Natural killer cell (primary cell): ENCODE measurements at regions of chr1 and their contacts with region 1.

Region 1: DNA sequence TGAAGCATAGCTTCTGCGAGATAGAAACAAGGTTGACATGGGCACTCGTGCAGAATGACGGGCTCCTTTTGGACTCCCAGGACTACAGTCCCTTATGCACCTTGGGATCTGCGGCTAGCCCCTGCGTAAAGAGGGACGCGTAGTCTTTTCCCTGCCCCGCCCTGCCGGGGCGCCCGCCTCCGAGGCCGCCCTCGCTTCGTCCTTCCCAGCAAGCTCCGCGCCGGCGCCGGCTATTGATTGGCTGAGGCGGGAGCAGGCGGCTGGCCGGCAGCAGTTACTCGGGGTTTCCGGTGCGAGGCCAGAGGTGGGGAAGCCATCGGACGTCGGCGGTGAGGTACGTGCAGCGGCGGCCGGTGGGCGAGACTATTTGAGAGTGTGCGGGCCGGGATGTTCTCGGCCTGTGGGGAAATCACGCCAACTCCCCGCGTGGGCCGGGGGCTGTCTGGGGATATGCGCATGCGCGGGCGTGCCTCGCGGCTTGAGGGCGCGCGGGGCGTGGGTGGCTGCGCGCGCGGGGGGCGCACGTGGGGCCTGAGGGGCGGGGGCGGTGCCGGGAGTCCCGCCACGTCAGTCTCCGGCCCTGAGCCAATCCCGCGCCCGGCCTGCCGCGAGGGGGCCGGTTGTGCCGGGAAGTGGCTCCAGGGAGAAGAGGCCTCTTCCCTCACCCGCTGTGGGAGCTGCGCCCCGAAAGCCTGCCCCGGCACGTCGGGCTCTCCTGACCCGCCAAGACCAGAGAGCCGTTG is at the start of gene TXLNA:
- DNase-seq: peak; percentile 87 to 92
- ATAC-seq: peak; percentile 86 to 93 (median 88)
- H3K4me3 ChIP-seq: peak within 1 kb of the TSS; percentile 70
- H3K4me3 Mint-ChIP-seq: peak within 1 kb of the TSS; percentile 95
- H3K27ac ChIP-seq: peak within 1 kb of the TSS; percentile 80
- H3K27ac Mint-ChIP-seq: peak within 1 kb of the TSS; percentile 95 to 98
- H3K4me1 ChIP-seq: peaks cover 28% of the 10 kb centered on the region
- H3K4me1 Mint-ChIP-seq: peaks cover 35 to 43% of the 10 kb centered on the region in 2 donors
- H3K27me3 ChIP-seq: no peaks in the 10 kb centered on the region
- H3K27me3 Mint-ChIP-seq: no peaks in the 10 kb centered on the region
- CTCF ChIP-seq: no peak
- total RNA-seq, gene TXLNA: 26.0 to 36.0 (median 33.3) TPM

Region 2: DNA sequence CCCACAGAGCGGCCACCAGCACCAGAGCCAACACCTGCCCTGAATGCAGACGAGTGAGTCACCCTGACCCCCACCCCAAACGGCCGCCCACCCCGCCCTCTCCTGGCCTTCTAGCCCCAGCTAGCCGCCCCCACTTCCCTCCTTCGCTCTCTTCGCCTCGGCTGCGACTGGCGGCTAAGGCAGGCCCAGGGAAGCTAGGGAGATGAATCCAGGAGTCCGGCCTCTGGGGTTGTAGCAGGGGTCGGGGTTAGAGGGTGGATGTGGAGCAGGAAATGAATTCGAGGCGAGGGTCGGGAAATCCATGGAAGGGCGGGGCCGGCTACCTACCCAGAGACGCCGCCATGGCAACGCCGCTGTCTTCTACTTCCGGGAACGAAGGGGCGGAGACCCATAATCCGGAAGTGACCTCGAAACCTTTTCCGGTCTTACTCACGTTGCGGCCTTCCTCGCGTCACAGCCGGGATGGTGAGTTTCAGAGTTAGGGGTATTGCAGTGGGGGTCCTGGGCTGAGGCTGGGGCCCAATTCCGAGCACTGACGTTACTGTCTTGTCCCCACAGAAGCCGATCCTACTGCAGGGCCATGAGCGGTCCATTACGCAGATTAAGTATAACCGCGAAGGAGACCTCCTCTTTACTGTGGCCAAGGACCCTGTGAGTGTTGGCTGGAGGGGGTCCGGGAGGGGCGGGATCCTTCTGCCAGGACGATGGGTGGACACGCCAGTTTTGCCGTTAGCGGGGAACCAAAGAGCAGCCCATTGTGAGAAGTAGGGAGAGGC is 42.6 kb after region 1 on chr1 and contains the starts of genes EIF3I and TMEM234:
- intact Hi-C with region 1: loop called (anchors 1 kb)
- DNase-seq: peak; percentile 86 to 97
- ATAC-seq: peak; percentile 89 to 96 (median 93)
- H3K4me3 ChIP-seq: peak within 1 kb of the TSS; percentile 54
- H3K4me3 Mint-ChIP-seq: peak within 1 kb of the TSS; percentile 92
- H3K27ac ChIP-seq: peak within 1 kb of the TSS; percentile 82
- H3K27ac Mint-ChIP-seq: peak within 1 kb of the TSS; percentile 92 to 96
- H3K4me1 ChIP-seq: peaks cover 30% of the 10 kb centered on the region
- H3K4me1 Mint-ChIP-seq: peaks cover 20 to 29% of the 10 kb centered on the region in 2 donors
- H3K27me3 ChIP-seq: no peaks in the 10 kb centered on the region
- H3K27me3 Mint-ChIP-seq: no peaks in the 10 kb centered on the region
- CTCF ChIP-seq: no peak
- total RNA-seq, gene EIF3I: 107 to 126 (median 110) TPM
- total RNA-seq, gene TMEM234: 22.2 to 27.1 (median 24.7) TPM

Region 3: GRCh38 chr1:32400876-32401631 is 221.4 kb after region 1 on chr1:
- intact Hi-C with region 1: no loop called
- DNase-seq: peak; percentile 23 to 73
- ATAC-seq: peak; percentile 70 to 88 (median 78)
- H3K4me3 ChIP-seq: no peak overlapping the region
- H3K4me3 Mint-ChIP-seq: no peak overlapping the region
- H3K27ac ChIP-seq: no peak overlapping the region
- H3K27ac Mint-ChIP-seq: no peak overlapping the region
- H3K4me1 ChIP-seq: peaks cover 4% of the 10 kb centered on the region
- H3K4me1 Mint-ChIP-seq: no peaks in the 10 kb centered on the region
- H3K27me3 ChIP-seq: no peaks in the 10 kb centered on the region
- H3K27me3 Mint-ChIP-seq: peaks cover 0 to 10% of the 10 kb centered on the region in 2 donors
- CTCF ChIP-seq: peak; percentile 69

Region 4: GRCh38 chr1:32539584-32540571 is 360.3 kb after region 1 on chr1:
- intact Hi-C with region 1: no loop called
- DNase-seq: peak in 1 of 2 donors; percentile 14
- ATAC-seq: peak in 2 of 3 donors; percentile 68 to 73
- H3K4me3 ChIP-seq: peak overlapping the region; percentile 18
- H3K4me3 Mint-ChIP-seq: peak overlapping the region; percentile 92
- H3K27ac ChIP-seq: no peak overlapping the region
- H3K27ac Mint-ChIP-seq: peak overlapping the region in 1 of 2 donors; percentile 36
- H3K4me1 ChIP-seq: peaks cover 11% of the 10 kb centered on the region
- H3K4me1 Mint-ChIP-seq: peaks cover 6 to 11% of the 10 kb centered on the region in 2 donors
- H3K27me3 ChIP-seq: peaks cover 33% of the 10 kb centered on the region
- H3K27me3 Mint-ChIP-seq: peaks cover 35 to 36% of the 10 kb centered on the region in 2 donors
- CTCF ChIP-seq: no peak